ENCODE measurements at regions of chr1 and their contacts with region 1.

Region 1: DNA sequence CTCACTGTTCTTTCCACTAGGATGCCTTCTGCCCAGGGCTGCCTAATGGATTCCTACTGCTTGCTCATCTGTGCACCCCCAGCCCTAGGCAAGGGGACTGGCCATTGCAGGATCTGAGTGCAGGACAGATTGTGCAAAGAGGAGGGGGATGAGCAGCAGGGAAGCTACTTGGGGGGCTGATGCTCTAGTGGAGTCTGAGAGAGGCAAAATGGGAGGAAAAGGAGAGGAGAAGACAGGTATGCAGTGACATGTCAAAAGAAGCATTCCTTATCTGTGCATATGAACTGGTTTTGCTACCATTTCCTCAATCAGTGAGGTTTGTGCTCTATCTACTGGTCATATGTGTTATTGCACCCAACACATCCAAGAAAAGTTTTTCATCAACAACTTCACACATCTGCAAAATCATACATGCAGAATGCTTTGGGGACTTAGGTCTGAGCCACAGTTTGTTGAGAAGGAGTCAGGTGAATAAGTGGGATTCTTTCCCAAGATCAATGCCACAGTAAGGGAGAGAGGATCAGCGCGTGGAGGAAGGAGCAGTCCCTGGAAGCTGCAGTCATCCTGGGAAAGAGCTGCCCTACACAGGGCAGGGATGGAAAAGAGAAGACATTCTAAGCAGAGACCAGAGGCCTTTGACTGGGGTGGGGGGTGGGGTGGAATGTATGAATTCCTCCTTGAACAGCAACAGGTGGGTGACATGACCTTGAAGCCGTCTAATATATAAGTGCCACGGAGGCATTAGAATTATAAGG is 14.4 kb downstream of the SLC5A9 start:
- DNase-seq: peak; percentile 62
- H3K4me3 ChIP-seq: no peak overlapping the region
- H3K27ac ChIP-seq: no peak overlapping the region
- H3K4me1 ChIP-seq: no peaks in the 10 kb centered on the region; a peak in 1 of 4 replicates
- H3K27me3 ChIP-seq: no peaks in the 10 kb centered on the region
- CTCF ChIP-seq: peak; percentile 59
- EP300 ChIP-seq: no peak
- RAD21 ChIP-seq: peak; percentile 81

Region 2: GRCh38 chr1:48109390-48110013 is 127.4 kb before region 1 on chr1:
- CTCF ChIA-PET with region 1: interaction called, 11 read pairs
- POLR2A ChIA-PET with region 1: no interaction called
- DNase-seq: peak; percentile 36
- H3K4me3 ChIP-seq: no peak overlapping the region
- H3K27ac ChIP-seq: no peak overlapping the region
- H3K4me1 ChIP-seq: no peaks in the 10 kb centered on the region
- H3K27me3 ChIP-seq: no peaks in the 10 kb centered on the region; the same call in 1 of the 2 replicates
- CTCF ChIP-seq: peak; percentile 86
- EP300 ChIP-seq: no peak
- RAD21 ChIP-seq: peak; percentile 93

Region 3: DNA sequence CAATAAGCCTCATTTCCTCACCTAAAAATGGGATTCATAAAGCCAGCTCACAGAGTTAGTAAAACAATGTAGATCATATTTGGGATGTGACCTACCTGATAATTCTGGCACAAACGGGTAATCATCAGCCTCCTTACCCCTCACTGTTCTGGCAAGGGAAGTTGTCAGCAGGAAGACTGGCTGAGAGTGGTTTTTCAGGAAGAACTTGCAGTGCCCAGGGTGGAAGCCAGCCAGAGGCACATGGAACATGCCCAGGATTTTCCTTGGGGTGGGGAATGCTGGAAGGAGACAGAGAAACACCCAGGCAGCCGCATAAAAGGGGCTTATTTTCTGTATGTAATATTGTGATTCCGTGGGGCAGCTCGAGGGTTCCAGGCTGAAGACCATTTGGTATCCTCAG is 22.1 kb before region 1 on chr1:
- CTCF ChIA-PET with region 1: interaction called, 17 read pairs
- POLR2A ChIA-PET with region 1: no interaction called
- DNase-seq: no peak
- H3K4me3 ChIP-seq: no peak overlapping the region
- H3K27ac ChIP-seq: no peak overlapping the region
- H3K4me1 ChIP-seq: no peaks in the 10 kb centered on the region
- H3K27me3 ChIP-seq: peaks cover 8% of the 10 kb centered on the region; the same call in 1 of the 2 replicates
- CTCF ChIP-seq: no peak
- EP300 ChIP-seq: no peak
- RAD21 ChIP-seq: no peak

Region 4: DNA sequence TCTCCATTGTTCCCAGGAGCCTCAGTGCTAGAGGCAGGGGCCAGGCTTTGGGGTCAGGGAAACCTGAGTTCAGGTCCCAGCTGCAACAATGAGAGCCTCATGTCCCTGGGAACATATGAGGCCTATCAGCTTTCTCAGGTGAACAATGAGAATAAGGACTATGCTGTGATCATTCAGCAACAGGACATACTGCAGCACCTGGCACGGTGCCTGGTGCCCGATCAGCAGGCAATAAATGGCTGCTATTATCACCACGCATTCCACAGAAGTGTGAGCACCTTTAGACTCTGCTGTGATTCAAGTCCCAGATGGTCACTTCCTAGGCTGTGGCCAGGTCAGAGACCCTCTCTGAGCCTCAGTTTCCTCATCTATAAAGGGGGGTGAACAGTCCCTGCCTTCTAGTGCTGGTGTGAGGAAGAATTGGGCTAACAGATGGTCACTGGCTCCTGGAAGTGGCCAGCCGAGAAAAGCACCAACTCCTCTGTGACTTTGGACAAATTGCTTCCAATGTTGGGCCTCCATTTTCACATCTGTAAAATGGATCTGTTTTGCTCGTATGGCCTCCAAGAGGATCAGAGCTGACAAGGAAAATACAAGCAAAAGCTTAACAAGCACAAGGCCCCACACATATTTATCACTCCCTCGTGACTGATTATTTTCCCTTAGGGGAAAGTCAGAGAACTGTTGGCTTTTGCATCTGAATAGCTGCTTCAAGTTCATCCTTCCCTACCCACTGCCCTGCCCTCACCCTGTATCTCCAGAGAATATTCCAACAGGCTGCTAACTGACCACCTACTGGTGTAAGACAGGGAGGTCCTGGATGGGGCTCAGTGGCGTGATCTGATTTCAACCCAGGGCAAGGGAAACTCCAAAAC is 13.3 kb before region 1 on chr1:
- CTCF ChIA-PET with region 1: interaction called, 11 read pairs
- POLR2A ChIA-PET with region 1: no interaction called
- DNase-seq: no peak
- H3K4me3 ChIP-seq: no peak overlapping the region
- H3K27ac ChIP-seq: no peak overlapping the region
- H3K4me1 ChIP-seq: no peaks in the 10 kb centered on the region
- H3K27me3 ChIP-seq: no peaks in the 10 kb centered on the region
- CTCF ChIP-seq: no peak
- EP300 ChIP-seq: no peak
- RAD21 ChIP-seq: no peak

Region 5: DNA sequence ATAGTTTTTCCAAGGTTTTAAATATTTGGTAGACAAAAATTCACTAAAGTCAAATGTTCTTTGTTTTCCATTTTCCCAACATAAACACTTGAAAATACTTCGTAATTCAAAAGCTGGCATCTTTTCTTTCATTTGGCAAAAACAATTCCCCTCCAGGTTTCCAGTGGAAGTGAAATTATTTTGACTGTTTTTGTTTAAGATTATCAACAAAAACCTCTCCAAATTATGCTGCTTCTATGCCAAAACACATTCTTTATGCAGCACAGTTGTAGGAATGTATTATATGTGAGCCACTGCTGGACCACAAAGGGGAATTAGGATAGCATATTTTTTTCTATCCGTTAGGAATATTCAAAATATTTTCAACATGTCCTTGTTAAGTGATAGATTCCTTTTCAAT is 29.7 kb after region 1 on chr1:
- CTCF ChIA-PET with region 1: no interaction called
- POLR2A ChIA-PET with region 1: no interaction called
- DNase-seq: no peak
- H3K4me3 ChIP-seq: no peak overlapping the region
- H3K27ac ChIP-seq: no peak overlapping the region
- H3K4me1 ChIP-seq: no peaks in the 10 kb centered on the region
- H3K27me3 ChIP-seq: no peaks in the 10 kb centered on the region
- CTCF ChIP-seq: no peak
- EP300 ChIP-seq: no peak
- RAD21 ChIP-seq: no peak

Measured in SK-N-SH (cell line).